ENCODE measurements at regions of chr7 and their contacts with region 1.

Region 1: DNA sequence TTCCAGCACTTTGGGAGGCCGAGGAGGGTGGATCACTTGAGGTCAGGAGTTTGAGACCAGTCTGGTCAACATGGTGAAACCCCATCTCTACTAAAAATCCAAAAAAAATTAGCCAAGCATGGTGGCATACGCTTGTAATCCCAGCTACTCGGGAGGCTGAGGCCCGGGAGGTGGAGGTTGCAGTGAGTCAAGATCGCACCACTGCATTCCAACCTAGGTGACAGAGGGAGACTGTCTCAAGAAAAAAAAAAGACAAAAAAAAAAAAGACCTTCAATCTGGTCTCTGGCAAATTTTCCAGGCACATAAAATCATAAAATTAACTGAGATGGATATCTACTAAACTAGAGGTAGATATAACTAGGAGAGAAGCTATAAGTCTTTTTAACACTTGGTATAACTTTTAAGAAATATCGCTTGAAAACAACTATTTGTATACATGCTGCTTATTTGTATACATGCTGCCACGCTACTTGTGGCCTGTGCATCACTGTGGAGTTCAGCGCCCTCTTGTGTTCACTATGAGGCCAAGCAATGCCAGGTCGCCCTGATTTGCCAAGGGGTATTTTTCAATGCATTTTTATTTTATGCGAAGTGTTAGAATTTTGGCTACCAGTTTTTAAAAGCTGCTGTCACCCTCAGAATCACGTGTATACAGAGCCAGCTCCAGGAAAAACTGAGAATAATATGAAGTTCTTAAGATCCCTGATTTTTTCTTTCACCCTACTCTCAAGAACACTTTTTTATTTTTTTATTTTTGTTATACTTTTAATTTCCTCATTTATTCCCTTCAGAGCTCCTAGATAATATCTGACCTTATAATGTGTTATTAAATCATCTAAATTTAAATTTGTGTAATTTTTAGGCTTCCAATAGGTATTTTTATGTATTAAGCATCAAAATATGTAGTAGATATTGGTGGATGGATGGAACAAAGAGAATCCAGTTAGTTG is 26.7 kb downstream of the CYCS start:
- DNase-seq: peak; percentile 69
- H3K4me3 Mint-ChIP-seq: no peak overlapping the region
- H3K27ac Mint-ChIP-seq: no peak overlapping the region
- H3K4me1 Mint-ChIP-seq: peaks cover 11% of the 10 kb centered on the region
- H3K27me3 Mint-ChIP-seq: peaks cover 2% of the 10 kb centered on the region

Region 2: GRCh38 chr7:24812310-24812945 is 285.9 kb before region 1 on chr7:
- CTCF ChIA-PET with region 1: interaction called, 251 read pairs
- POLR2A ChIA-PET with region 1: no interaction called
- intact Hi-C with region 1: loop called (anchors 1 kb)
- DNase-seq: peak; percentile 58
- H3K4me3 Mint-ChIP-seq: no peak overlapping the region
- H3K27ac Mint-ChIP-seq: no peak overlapping the region
- H3K4me1 Mint-ChIP-seq: no peaks in the 10 kb centered on the region
- H3K27me3 Mint-ChIP-seq: no peaks in the 10 kb centered on the region

Region 3: GRCh38 chr7:24877790-24878311 is 220.5 kb before region 1 on chr7:
- CTCF ChIA-PET with region 1: interaction called, 20 read pairs
- POLR2A ChIA-PET with region 1: no interaction called
- intact Hi-C with region 1: no loop called
- DNase-seq: peak; percentile 46
- H3K4me3 Mint-ChIP-seq: peak overlapping the region; percentile 38
- H3K27ac Mint-ChIP-seq: peak overlapping the region; percentile 61
- H3K4me1 Mint-ChIP-seq: peaks cover 55% of the 10 kb centered on the region
- H3K27me3 Mint-ChIP-seq: no peaks in the 10 kb centered on the region

Region 4: GRCh38 chr7:25087855-25088254 is 10.5 kb before region 1 on chr7:
- CTCF ChIA-PET with region 1: interaction called, 38 read pairs
- POLR2A ChIA-PET with region 1: no interaction called
- intact Hi-C with region 1: no loop called
- DNase-seq: no peak
- H3K4me3 Mint-ChIP-seq: no peak overlapping the region
- H3K27ac Mint-ChIP-seq: no peak overlapping the region
- H3K4me1 Mint-ChIP-seq: no peaks in the 10 kb centered on the region
- H3K27me3 Mint-ChIP-seq: no peaks in the 10 kb centered on the region

Region 5: DNA sequence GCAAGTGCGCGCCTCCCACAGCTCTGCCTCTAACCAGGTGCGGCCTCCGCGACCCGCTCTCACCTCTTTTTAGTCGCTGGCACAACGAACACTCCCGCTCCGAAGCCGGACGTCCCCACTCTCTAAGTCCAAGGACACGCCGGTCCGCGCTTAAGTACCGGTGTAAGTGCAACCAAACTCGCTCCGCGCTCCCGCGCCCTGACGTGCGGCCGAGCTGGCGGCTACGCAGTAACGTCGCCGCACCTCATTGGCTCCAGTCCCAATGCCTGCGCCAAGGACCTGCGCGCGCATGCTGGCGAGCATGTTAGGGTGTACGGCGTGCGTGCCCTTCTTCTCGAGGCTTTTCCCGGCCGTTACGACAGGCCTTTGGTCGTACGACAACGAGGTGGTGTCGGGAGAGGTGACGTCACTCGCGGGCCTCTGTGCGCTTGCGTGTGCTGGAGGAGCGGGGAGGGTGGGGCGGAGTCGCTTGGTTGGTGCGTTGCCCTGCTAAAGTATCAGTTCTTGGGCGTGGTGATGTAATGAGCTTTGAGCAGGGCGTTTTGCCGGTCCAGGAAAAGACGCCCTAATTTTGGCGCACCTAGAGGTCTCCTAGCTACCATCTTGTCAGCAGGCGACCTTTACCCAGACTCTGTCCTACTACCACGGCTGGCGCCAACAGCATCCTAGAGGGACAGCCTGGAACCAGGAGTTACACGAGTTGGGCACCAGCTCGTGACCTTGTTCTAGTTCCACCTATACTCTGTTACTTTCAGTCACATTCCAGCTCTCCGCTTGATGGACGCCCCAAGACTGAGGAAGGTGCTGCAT is 27.0 kb after region 1 on chr7 and contains the start of gene CYCS:
- CTCF ChIA-PET with region 1: interaction called, 11 read pairs
- POLR2A ChIA-PET with region 1: no interaction called
- intact Hi-C with region 1: no loop called
- DNase-seq: peak; percentile 100
- H3K4me3 Mint-ChIP-seq: peak within 1 kb of the TSS; percentile 100
- H3K27ac Mint-ChIP-seq: peak within 1 kb of the TSS; percentile 100
- H3K4me1 Mint-ChIP-seq: peaks cover 24% of the 10 kb centered on the region
- H3K27me3 Mint-ChIP-seq: no peaks in the 10 kb centered on the region
- total RNA-seq, gene CYCS: 199 to 207 TPM

Region 6: DNA sequence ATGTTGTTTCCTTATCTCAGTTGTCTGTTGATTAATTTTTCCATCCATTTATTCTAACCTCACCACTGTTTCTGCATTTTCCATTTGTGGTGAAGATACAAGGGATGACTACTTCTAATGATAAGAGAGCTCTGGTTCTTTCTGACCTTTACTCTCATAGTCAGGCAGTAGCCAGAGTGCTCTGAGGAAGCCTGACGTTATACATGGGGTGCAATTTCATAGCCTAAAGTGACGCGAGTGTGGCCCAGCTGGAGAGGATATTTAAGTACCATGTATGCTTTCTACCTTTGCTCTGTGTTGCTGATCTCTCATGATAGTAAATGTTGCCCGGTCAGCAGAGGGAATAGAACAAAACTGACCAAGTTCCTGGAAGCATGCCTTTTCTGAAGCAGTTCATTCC is 60.6 kb after region 1 on chr7:
- CTCF ChIA-PET with region 1: interaction called, 7 read pairs
- POLR2A ChIA-PET with region 1: no interaction called
- intact Hi-C with region 1: loop called (anchors 1 kb)
- DNase-seq: no peak
- H3K4me3 Mint-ChIP-seq: no peak overlapping the region
- H3K27ac Mint-ChIP-seq: no peak overlapping the region
- H3K4me1 Mint-ChIP-seq: peaks cover 2% of the 10 kb centered on the region
- H3K27me3 Mint-ChIP-seq: no peaks in the 10 kb centered on the region